Activated naive CD4-positive, alpha-beta T cell treated with anti-CD3 and anti-CD28 coated beads for 36 hours (primary cell): ENCODE measurements at regions of chr16 and their contacts with region 1.

Region 1: DNA sequence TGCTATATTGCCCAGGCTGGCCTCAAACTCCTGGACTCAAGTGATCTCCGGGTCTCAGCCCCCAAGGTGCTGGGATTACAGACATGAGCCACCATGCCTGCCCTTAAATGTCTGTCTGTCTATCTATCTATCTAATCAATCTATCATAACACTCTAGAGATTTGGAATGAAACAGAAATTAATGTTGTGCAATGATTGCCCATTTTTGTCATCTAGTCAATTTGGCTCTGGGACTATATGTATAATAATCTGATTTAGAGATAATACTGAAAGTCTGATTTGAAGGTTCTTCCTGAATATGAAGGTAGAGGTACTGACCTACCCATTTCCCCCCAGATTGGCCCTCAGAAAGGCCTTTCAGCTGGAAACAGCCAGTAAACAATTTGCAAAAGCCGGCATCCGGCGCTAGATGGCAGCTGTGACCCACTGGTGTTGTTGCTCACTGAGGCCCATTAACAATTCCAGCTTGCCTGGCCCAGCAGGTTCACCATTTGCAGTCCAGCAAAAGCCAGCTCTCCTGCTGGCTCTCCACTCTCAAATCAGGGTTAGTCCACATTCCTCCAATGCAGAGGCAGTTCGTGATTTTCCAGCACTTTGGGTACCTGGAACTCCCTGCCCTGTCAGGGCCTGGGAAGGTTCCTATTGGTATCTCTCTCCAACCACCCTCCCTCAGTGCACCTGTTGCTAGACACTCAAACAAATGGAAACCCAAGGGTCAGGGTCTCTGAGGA is 22.9 kb upstream of the C16orf87 start:
- DNase-seq: peak; percentile 81
- H3K4me3 Mint-ChIP-seq: no peak overlapping the region
- H3K27ac Mint-ChIP-seq: no peak overlapping the region
- H3K4me1 Mint-ChIP-seq: no peaks in the 10 kb centered on the region
- H3K27me3 Mint-ChIP-seq: no peaks in the 10 kb centered on the region

Region 2: DNA sequence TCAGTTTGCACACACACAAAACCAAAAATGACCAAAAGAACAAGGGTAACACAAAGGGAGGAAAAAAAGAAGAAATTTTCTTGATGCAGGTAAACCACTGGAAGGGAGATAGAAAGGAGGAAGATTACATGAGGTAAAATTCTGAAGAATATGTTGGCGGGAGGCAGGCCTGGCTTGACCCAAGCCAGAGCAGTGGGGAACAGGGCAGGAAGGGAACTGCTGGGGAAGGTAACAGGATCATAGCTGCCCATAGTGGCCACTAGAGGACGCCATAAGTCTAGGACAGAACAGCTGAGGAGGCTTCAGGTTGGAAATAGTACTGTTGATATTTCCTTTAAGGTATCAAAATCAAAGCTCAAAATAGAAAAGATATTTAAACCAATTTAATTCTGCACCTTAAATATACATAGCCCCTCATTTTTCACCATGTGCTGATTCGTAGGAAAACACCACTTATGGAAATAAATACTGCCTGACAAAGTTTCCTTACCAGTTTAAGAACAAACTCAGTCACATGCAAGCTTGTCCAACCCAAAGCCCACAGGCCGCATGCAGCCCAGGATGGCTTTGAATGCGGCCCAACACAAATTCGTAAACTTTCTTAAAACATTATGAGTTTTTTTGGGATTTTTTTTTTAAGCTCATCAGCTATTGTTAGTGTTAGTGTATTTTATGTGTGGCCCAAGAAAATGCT is 180.4 kb before region 1 on chr16:
- CTCF ChIA-PET with region 1: interaction called, 11 read pairs
- intact Hi-C with region 1: no loop called
- DNase-seq: peak; percentile 66
- H3K4me3 Mint-ChIP-seq: no peak overlapping the region
- H3K27ac Mint-ChIP-seq: no peak overlapping the region
- H3K4me1 Mint-ChIP-seq: no peaks in the 10 kb centered on the region
- H3K27me3 Mint-ChIP-seq: no peaks in the 10 kb centered on the region

Region 3: DNA sequence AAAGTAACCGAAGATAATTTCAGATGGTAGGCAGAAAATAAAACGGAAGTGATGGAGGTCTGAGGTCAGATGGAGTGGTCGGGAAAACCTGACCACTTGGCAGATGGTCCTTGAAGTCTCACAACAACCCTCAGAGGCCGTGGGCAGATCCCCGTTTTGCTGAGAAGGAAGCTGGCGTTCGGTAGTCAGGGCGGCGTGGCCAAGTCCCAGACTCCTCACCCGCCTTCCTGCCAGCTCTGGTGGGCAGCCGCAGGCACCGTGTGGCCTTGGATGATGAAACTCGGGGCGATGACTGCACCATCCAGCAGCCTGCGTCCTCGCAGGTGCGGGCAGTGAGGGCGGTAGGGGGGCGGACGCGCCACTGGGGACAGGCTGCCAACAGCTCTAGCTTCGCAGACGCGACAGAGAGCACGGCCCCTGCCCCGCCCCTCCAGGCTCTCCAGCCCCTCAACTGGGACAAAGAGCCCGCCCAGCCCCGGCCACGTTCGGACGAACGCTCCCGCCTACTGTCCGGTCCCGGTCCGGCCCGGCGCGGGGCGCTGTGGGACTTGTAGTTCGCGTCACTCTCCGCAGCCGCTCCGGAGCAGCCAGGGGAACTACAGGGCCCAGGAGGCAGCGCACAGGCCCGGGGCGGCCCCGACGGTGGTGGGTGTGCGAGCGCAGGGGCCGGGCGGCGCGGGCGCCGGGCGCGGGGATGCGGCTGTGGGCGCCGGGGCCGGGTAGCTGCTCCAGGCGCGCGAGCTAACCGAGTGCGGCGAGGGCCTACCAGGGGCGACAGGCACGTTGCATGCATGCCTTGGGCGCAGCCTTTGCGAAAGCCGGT is 30.0 kb after region 1 on chr16 and contains the start of gene GPT2:
- CTCF ChIA-PET with region 1: interaction called, 10 read pairs
- intact Hi-C with region 1: no loop called
- DNase-seq: peak; percentile 80
- H3K4me3 Mint-ChIP-seq: peak within 1 kb of the TSS; percentile 78
- H3K27ac Mint-ChIP-seq: peak within 1 kb of the TSS; percentile 68
- H3K4me1 Mint-ChIP-seq: peaks cover 9% of the 10 kb centered on the region
- H3K27me3 Mint-ChIP-seq: peaks cover 19% of the 10 kb centered on the region
- total RNA-seq, gene GPT2: 15.5 to 18.6 TPM